ENCODE measurements at regions of chr1 and their contacts with region 1.

Region 1: DNA sequence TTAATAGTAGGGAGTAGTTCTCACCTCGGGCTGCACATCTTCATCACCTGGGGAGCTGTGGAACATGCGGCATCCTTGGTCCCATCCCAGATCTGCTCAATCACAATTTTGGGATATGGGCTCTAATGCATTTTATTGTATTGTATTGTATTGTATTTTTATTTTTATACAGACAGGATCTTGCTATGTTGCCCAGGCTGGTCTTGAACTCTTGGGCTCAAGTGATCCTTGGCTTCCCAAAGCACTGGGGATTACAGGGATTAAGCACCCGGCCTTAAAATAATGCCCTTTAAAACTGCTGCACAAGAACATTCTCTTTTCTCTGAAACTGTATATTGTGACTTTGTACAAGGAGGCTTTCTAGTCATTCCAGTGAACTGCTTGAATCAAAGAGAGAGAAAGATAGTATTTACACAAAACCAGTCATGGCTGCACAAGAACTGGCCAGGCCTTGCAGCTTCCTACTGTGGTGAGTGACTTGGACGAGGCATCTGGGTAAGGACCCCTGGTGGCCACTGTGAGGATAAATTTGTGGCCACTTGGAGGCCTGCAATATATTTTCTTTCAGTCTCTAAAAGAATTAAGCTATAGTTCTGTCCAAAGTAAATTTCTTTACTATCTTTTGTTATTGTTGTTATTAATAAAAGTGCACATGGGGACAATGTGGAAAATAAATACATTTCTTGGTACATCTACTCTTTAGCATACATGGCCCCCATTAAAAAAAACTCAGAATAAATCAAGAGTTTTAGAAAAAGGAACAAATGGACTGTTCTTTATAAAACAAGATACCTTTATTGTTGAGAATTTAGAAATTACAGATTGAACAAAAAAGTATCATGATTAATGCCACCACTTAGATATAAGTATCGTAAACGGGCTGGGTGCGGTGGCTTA is 48.0 kb downstream of the TBCE start:
- DNase-seq: peak; percentile 66
- ATAC-seq: peak; percentile 68

Region 2: DNA sequence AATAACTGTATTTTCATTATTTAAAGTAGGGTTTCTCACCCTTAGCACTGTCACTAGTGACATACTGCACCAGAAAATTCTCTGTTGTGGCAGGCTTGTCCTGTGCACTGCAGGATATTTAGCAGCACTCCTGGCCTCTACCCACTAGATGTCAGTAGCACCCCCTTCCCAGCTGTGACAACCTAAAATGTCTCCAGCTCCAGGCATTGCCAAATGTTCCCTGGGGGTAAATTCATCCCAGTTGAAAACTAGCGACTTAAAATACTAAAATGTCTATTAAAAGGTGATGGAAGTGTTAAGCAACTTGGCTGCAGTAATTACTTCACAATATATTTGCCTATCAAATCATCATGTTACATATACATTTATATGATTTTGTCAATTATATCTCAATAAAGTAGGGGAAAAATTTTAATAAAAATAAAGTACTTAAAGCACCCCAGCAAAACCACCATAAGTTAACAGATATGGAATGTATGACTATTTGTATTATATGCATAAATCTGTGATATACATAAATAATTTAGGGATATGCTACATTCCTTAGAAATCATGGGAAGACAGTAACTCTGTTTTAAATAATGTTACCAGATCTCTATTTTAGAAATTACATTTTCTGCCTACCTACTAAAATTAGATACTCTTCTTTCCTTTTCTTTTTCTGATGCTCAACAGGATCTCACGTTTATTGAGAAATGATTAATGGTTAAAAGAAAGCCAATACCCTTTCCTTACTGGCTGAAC is 161.9 kb before region 1 on chr1:
- intact Hi-C with region 1: loop called (anchors 2 kb)
- DNase-seq: no peak
- ATAC-seq: peak; percentile 95

Region 3: DNA sequence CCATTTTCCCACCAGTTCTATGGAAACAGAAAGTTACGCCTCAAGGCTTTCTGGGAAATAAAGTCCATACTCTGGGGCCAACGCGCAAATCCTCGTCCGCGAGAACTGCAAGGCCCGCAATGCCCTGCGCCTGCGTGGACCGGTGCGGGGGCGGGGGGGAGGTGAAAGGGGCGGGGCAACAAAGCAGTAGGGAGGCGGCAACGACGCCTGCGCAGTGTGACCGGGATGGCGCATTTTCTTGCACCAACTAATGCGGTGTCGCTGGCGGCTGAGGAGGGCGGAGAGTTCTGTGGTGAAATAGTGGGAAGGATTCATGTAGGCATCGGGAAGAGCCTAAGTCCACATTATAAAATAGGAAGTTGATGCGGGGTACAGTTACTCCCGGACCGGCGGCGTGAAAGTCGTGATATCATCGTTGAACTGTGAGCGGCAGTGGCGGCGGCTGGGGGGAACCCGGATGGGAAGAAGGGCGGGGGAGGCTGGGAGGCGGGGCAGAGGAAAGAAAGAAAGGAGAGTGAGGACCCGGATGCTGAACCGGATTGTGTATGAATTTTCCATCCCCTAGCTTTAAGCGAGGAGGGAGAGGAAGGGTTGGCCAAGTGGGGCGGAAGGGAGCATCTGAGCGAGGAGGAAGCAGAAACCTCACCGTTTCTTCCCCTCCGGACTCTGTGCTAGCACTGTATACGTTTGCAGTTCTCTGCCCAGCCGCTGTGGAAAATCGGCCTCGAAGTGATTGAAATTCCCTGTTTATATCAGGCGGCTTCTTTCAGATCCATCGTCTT is 86.7 kb before region 1 on chr1 and contains the start of gene GGPS1:
- intact Hi-C with region 1: loop called (anchors 5 kb)
- DNase-seq: peak; percentile 99
- ATAC-seq: peak; percentile 96
- total RNA-seq, gene GGPS1: 31.4 TPM

Measured in Right ventricle myocardium superior (tissue), 1 donor.